AG04449 (cell line): ENCODE measurements at regions of chr6 and their contacts with region 1.

Region 1: DNA sequence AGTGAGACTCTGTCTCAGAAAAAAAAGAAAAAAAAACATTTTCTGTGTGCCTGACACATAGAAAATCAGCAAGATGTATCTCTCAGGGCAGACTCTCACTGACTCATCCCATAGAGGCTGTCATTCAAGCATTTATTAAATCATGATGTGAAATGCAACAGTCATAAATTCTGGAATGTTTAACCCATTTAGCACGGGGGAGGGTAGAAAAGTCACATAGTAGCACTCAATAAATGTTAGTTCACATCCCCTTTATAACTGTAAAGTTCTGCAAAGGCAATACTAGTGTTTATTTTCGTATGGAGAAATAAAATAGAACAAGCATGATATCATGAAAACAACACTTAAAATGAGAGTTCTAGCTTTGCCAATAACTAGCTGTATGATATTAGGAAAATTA is 15.5 kb upstream of the CARMIL1 start:
- DNase-seq: peak; percentile 19
- H3K4me3 ChIP-seq: no peak overlapping the region
- CTCF ChIP-seq: no peak

Region 2: GRCh38 chr6:25229671-25230321 is 33.9 kb before region 1 on chr6:
- CTCF ChIA-PET with region 1: interaction called, 12 read pairs
- POLR2A ChIA-PET with region 1: no interaction called
- DNase-seq: peak; percentile 93
- H3K4me3 ChIP-seq: no peak overlapping the region
- CTCF ChIP-seq: no peak

Region 3: DNA sequence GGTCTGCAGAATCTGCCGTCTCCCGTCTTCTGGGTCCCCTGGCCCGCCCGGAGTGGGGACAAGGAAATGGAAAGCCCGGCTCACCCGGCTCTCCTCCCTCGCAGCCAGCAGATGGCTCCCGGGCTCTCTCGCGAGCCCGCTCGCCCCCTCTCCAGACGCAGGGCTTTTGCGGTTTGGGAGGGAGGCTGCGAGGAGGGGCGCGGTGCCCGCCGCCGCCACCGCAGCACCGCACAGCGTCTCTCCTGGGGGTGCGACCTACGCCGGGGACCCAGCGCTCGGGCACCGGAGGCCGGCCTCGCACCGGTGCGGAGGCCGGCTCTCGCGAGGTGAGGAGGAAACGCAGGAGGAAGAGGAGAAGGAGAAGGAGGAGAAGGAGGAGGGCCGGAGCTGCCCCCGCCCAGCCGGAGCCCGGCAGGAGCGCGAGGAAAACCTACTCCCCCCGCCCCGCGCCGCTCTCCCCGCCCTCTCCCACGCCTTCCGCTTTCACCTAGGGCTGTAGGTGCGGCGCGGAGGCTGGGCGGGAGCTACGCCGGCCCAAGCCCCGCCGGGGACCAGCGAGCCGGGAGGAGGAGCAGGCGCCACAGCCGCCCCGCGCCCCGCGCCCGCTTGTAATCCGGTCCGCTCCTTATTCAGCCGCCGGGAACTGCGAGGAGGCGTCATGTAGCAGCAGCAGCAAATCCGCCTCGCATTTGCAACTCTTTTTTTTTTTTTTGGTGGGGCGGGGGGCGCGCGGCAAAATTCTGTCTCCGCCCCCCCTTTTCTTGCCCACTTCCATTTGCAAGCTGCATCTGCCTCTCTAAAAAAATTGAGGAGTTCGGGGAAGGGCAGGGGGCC is 15.5 kb after region 1 on chr6 and contains the start of gene CARMIL1:
- CTCF ChIA-PET with region 1: interaction called, 109 read pairs
- POLR2A ChIA-PET with region 1: no interaction called
- DNase-seq: no peak
- H3K4me3 ChIP-seq: peak within 1 kb of the TSS; percentile 71
- CTCF ChIP-seq: peak; percentile 73

Region 4: DNA sequence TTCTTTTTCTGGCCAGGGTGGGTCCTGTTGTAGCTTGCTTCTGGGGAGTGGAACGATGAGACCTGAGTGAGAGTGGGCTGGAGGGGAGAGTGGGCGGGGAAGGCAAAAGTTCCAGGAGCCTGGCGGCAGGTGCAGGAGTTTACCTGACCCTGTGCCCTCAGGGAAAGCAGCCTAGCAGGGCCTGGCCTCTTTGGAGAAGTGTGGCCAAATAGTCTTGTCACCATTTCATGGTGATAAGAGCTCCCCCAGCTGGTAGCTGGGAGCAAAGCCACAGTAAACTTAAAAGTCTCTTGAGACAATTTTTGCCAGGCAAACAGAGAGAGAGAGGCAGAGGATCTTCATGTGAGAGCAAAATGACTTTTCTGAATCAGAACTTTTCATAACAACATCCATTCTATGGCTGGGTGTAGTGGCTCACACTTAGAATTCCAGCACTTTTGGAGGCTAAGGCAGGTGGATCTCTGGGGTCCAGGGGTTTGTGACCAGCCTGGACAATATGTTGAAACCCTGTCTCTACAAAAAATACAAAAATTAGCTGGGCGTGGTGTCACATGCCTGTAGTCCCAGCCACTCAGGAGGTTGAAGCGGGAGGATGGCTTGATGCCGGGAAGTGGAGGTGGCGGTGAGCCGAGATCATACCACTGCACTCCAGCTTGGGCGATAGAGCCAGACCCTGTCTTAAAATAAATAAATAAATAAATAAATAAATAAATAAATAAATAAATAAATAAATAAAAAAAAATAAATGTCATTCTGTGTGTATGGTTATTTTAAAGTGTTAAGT is 226.6 kb after region 1 on chr6:
- CTCF ChIA-PET with region 1: interaction called, 104 read pairs
- POLR2A ChIA-PET with region 1: interaction called, 3 read pairs
- DNase-seq: no peak
- H3K4me3 ChIP-seq: no peak overlapping the region
- CTCF ChIP-seq: peak; percentile 76

Region 5: DNA sequence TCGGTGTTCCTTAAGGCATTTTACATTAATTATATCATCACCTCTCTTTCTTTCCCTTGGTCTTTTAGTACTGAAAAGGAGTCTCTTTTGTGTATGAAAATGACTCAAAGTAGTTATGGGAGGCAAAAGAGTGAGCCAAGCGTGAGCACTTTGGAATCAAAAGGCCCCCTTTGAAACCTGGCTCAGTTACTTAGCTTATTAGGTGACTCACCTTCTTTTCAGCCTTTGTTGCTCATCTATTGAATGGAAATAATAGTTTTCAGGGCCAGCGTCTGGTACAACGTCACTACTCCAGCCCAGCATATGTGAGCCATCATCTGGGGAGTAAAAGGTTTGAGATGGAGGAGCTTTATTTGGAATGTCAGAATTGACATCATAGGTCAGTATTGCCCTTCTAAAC is 241.0 kb after region 1 on chr6:
- CTCF ChIA-PET with region 1: interaction called, 12 read pairs
- POLR2A ChIA-PET with region 1: no interaction called
- DNase-seq: no peak
- H3K4me3 ChIP-seq: no peak overlapping the region
- CTCF ChIP-seq: no peak

Region 6: GRCh38 chr6:25601800-25602673 is 338.4 kb after region 1 on chr6:
- CTCF ChIA-PET with region 1: interaction called, 14 read pairs
- POLR2A ChIA-PET with region 1: no interaction called
- DNase-seq: peak; percentile 7
- H3K4me3 ChIP-seq: no peak overlapping the region
- CTCF ChIP-seq: peak; percentile 15